Activated naive CD4-positive, alpha-beta T cell treated with anti-CD3 and anti-CD28 coated beads, Interleukin-2, amount 10 ng/mL, durations not matched to agents 7 days and 5 days (primary cell): ENCODE measurements at regions of chr11 and their contacts with region 1.

Region 1: DNA sequence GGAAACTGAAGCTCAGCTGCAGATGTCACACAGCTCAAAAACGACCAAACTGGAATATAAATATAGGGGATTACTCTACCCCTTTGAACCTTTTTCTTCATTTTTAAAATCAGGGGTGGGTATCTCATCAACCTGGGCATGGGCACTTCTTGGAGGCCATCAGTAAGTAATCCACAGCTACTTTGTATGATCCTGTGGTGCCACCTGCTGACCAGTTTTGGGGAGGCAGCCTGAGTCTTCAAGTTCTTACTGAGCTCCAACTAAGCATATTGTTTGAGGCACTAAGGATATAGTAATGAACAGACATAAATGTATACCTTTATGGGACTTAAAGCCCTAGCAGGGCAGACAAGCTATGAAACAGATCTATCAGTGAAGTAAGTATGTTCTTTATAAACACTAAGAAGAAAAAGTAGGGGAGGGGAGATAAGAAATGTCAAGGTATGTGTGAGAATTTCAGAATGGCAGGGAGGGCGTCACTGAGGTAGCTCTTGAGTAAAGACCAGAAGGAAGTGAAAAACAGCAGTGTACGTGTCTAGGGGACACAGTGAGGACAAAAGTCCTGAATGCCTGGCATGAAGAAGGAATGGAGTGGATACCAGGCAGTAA is 18.4 kb downstream of the TUB start:
- DNase-seq: peak; percentile 83
- H3K4me3 Mint-ChIP-seq: no peak overlapping the region
- H3K27ac Mint-ChIP-seq: no peak overlapping the region
- H3K4me1 Mint-ChIP-seq: no peaks in the 10 kb centered on the region
- H3K27me3 Mint-ChIP-seq: no peaks in the 10 kb centered on the region

Region 2: DNA sequence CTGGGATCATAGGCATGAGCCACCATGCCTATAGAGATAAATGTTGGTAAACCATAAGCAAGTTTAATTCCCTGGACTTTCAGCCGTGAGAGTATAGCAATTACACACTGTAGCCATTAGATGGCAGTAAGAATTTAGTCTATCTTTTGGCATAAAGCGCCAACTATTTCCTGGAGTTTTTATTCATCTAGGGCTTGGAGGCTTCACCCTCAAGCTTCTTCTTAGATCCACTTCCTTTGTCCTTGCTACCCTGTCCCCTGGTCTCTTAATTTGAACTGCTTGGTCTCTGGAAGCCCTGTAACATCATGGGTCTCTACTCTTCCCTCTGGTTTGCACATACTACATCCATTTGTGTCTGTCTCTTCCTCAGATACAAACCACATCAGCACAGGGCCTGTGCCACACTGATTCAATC is 206.5 kb before region 1 on chr11:
- CTCF ChIA-PET with region 1: interaction called, 15 read pairs
- DNase-seq: no peak
- H3K4me3 Mint-ChIP-seq: no peak overlapping the region
- H3K27ac Mint-ChIP-seq: no peak overlapping the region
- H3K4me1 Mint-ChIP-seq: no peaks in the 10 kb centered on the region
- H3K27me3 Mint-ChIP-seq: peaks cover 9% of the 10 kb centered on the region

Region 3: DNA sequence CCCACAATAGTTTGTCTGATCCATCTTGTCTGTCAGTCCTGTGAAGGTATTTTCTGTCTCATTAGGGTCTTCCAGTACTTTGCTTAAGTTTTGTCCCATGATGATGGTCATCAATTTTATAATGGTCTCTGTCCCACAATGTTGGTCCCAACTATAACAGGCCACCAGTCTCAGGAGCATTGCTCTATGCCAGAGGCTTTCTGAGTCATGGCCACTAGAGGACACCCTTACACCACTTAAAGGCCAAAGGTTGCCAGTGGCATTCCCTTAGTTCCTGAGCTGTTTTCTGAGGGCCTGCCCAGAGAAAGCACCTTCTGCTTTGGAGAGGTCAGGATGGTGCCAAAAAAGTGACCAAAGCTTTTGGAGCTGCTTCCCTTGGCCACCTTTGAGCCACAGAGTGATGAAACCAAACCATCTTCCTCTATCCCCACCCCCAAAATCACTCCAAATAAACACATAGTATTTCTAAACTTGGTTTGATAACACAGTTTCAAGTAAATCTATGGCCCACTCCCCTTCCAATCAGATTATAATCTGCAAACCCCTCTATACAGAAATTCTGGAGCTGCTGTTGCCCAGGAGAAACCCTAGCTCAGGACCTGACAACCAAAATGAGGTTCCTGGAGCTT is 92.9 kb before region 1 on chr11:
- CTCF ChIA-PET with region 1: interaction called, 217 read pairs
- DNase-seq: peak; percentile 58
- H3K4me3 Mint-ChIP-seq: no peak overlapping the region
- H3K27ac Mint-ChIP-seq: no peak overlapping the region
- H3K4me1 Mint-ChIP-seq: no peaks in the 10 kb centered on the region
- H3K27me3 Mint-ChIP-seq: peaks cover 9% of the 10 kb centered on the region

Region 4: GRCh38 chr11:8033305-8034105 is 65.9 kb before region 1 on chr11:
- CTCF ChIA-PET with region 1: interaction called, 178 read pairs
- DNase-seq: peak; percentile 51
- H3K4me3 Mint-ChIP-seq: no peak overlapping the region
- H3K27ac Mint-ChIP-seq: no peak overlapping the region
- H3K4me1 Mint-ChIP-seq: peaks cover 4% of the 10 kb centered on the region
- H3K27me3 Mint-ChIP-seq: peaks cover 53% of the 10 kb centered on the region

Region 5: DNA sequence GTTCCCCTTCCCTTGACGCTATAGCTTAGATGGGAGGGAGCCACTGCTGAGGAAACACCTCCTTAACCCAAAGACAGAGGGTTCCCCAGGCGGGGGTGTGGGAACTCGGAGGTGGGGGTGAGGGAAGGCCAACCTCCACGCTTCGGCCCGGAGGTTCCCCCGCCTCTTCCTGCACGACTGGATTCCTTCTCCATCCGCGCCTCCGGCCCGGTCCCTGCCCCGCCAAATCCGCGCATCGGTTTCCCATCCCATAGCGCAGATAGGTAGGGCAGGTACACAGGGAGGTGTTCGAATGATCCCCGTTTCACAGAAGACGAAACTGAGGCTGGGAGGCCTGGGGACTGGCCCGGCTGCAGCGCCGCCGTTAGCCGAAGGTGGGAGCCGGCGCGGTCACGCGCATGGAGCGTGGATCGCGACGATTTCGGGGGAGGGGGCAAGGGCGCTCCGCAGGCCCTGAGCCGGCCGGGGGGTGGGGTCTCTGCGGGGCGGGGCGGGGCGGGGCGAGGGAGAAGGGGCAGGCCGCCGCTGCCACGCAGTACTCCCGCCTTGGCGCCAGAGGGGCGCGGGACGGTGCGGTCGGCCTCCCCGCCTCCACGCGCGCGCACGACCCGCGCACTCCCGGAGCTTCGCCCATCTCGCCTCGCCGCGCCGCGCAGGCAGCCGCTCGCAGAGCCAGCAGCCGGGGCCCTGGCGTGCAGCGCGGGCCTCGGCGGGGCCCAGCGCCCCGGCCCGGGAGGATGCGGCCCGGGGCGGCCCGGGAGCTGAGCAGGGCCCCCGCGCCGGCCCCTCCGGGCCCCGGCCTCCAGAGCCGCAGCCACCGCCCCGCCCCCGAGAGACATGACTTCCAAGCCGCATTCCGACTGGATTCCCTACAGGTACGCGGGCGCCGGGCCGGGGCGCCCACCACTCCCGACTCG is 18.5 kb before region 1 on chr11 and contains the start of gene TUB:
- CTCF ChIA-PET with region 1: interaction called, 49 read pairs
- DNase-seq: no peak
- H3K4me3 Mint-ChIP-seq: peak within 1 kb of the TSS; percentile 55
- H3K27ac Mint-ChIP-seq: no peak within 1 kb of the TSS
- H3K4me1 Mint-ChIP-seq: peaks cover 4% of the 10 kb centered on the region
- H3K27me3 Mint-ChIP-seq: peaks cover 66% of the 10 kb centered on the region

Region 6: GRCh38 chr11:8149726-8150125 is 50.3 kb after region 1 on chr11:
- CTCF ChIA-PET with region 1: no interaction called
- DNase-seq: no peak
- H3K4me3 Mint-ChIP-seq: no peak overlapping the region
- H3K27ac Mint-ChIP-seq: no peak overlapping the region
- H3K4me1 Mint-ChIP-seq: no peaks in the 10 kb centered on the region
- H3K27me3 Mint-ChIP-seq: no peaks in the 10 kb centered on the region